ENCODE measurements at regions of chr6 and their contacts with region 1.

Region 1: DNA sequence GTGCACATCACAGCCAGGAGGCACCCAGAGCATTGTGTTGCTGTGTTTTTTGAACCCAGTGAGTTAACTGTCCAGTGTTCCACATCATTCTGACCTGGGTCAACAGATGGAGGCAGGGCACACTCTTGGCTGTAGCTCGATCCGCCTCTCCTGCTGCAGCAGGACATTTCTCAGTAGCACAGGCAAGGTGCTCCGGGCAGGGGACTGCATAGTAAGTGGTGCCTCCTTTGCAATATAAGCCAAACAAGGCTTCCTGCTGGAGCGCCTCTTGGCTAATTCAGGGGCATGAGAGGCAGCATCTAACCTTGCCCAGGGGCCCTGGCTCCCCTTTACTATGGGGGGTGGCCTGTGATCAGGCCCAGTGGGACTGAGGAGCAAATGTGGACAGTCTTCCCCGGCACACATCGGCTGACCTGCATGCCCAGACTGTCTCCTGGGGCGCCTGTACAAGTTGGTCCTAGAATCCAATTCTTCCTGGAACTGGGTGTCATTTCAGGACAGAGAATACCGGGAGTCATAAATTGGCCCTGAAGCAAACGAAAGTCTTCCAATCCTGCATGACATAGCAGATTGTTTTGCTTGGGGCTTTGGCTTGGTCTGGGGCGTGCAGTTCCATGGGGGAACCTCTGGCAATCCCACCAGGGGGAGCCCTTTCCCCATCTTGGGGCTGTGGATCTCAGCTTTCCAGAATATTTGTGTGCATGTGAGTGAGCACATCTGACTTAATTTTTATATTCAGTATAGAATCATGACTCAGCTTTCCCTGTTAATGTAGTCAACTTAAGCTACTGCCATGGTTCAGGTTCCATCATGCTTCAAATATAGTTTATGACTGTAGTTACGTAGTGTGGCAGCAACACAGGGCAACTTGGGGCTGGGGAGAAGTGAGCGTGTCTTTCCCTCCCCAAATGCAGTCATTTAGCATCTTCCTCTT is 56.0 kb upstream of the DDR1 start:
- DNase-seq: peak; percentile 82

Region 2: GRCh38 chr6:30877419-30878371 is 49.4 kb after region 1 on chr6:
- CTCF ChIA-PET with region 1: interaction called, 11 read pairs
- POLR2A ChIA-PET with region 1: interaction called, 3 read pairs
- DNase-seq: peak; percentile 78

Region 3: GRCh38 chr6:31087494-31088089 is 259.3 kb after region 1 on chr6:
- CTCF ChIA-PET with region 1: interaction called, 11 read pairs
- POLR2A ChIA-PET with region 1: no interaction called
- DNase-seq: peak; percentile 84